ENCODE measurements at regions of chr7 and their contacts with region 1.

Region 1: GRCh38 chr7:36487756-36488336 is 98.2 kb downstream of the ANLN start:
- DNase-seq: no peak
- ATAC-seq: peak; percentile 85 to 94 (median 89)
- H3K4me3 ChIP-seq: no peak overlapping the region
- H3K27ac ChIP-seq: no peak overlapping the region
- H3K4me1 ChIP-seq: no peaks in the 10 kb centered on the region
- H3K27me3 ChIP-seq: peaks cover 0 to 4% of the 10 kb centered on the region in 2 donors
- CTCF ChIP-seq: peak; percentile 74 to 92 (median 78)
- POLR2A ChIP-seq: no peak

Region 2: GRCh38 chr7:36272567-36273269 is 215.1 kb before region 1 on chr7:
- intact Hi-C with region 1: no loop called
- DNase-seq: peak; percentile 75 to 93 (median 89)
- ATAC-seq: peak; percentile 92 to 98 (median 94)
- H3K4me3 ChIP-seq: no peak overlapping the region
- H3K27ac ChIP-seq: peak overlapping the region; percentile 58 to 91 (median 87)
- H3K4me1 ChIP-seq: peaks cover 0 to 27% (median 12%) of the 10 kb centered on the region in 4 donors
- H3K27me3 ChIP-seq: no peaks in the 10 kb centered on the region
- CTCF ChIP-seq: no peak
- POLR2A ChIP-seq: no peak

Region 3: DNA sequence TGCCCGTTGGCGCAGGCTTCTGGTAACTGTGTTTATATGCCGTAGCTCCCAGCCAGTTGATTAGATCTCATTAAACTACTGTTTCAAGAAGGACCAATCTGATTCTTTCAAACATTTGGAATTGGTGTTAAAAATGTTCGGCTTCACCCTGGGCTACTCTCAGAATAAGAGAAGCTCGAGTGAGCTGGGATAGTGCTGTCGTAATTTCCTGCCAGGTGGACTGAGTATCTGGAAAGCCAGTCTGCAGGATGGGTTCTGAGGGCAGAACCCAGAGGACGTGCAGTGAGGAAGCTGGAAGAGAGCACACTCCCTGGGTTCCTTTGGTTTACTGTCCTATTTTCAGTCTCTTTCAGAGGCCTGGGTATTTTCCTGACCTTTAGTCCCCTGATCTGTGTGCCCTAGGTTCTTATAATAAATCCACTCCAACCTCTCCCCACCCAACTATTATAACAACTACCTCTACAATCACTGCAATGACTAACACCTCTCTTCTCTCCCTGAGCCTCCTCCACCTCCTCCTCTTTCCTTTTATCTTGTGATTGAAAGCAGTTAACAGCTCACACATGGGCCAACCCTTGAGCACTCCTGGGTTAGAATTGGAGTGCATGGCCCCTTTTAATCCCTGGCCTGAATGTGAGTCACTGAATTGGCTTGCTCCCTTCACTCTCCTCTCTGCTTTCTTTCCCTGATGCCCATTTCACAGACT is 173.4 kb after region 1 on chr7:
- intact Hi-C with region 1: loop called in 1 of 2 experiments (anchors 10 kb)
- DNase-seq: no peak
- ATAC-seq: no peak
- H3K4me3 ChIP-seq: no peak overlapping the region
- H3K27ac ChIP-seq: no peak overlapping the region
- H3K4me1 ChIP-seq: peaks cover 0 to 3% (median 0%) of the 10 kb centered on the region in 4 donors
- H3K27me3 ChIP-seq: no peaks in the 10 kb centered on the region
- CTCF ChIP-seq: no peak
- POLR2A ChIP-seq: no peak

Region 4: DNA sequence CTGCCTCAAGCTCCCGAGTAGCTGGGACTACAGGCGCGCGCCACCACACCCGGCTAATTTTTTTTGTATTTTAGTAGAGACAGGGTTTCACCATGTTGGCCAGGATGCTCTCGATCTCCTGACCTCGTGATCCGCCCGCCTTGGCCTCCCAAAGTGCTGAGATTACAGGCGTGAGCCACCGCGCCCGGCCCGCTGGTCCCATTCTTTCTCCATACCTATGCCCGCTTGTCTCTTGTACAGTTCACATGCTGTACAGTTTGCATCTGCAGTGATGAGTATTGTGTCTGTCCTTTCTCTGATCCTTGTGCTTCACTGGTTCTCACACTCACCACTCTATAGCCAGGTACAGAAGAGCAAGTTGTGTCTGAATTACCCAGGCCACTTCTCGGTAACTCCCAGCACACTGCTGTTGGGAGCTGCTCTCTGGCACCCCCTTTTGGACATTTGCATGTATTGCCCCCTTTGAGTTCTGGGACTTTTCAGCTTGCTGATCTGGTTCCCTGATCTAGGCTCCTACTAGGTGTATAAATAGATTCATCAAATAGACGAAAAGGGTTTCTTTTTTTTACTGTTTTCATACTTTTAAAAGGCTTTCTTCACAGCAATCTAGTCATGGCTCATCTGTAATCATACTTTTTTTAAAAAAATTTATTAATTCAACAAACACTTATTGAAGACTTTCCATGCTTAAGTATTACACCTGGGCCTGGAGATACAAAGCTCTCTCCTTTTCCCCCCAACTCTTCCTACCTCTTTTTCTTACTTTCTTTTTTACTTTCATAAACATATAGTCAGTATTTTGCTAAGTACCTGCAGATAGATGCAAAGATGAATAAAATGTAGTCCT is 183.0 kb after region 1 on chr7:
- intact Hi-C with region 1: loop called (anchors 10 kb)
- DNase-seq: peak in 2 of 3 donors; percentile 35 to 68
- ATAC-seq: peak; percentile 98 to 100 (median 99)
- H3K4me3 ChIP-seq: no peak overlapping the region
- H3K27ac ChIP-seq: no peak overlapping the region
- H3K4me1 ChIP-seq: no peaks in the 10 kb centered on the region
- H3K27me3 ChIP-seq: no peaks in the 10 kb centered on the region
- CTCF ChIP-seq: peak; percentile 91 to 94 (median 92)
- POLR2A ChIP-seq: no peak